HEK293 (cell line): ENCODE measurements at regions of chr16 and their contacts with region 1.

Region 1: DNA sequence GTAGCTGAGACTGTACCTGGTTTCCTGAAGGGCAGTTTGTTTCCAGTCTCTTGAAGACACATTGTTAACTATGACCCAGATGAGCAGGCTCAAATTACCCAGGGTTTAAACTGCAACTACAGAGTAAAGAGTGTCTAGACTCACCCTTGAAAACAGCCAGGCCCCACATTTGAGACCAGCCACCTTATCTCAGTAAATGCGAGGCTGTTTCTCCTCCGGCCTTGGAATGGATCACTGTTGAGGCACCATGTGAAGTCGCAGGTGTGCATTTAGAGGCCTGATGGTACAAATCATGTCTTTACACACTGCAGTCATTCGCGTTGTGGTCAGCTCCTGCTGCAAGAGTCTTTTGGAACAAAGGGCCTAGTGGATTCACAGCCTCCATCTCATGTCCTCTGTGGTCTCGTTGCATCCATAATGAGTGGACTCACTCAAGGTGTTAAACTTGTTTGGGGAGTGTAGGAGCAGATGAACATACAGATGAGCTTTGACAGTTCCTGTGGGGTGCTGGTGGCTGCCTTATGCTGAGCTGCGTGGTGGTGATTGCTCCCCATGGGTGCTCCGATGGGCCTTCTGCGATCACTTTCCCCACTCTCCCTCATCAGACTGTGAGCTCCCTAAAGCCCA is 18.5 kb upstream of the N4BP1 start:
- H3K4me3 ChIP-seq: no peak overlapping the region
- H3K27ac ChIP-seq: no peak overlapping the region
- H3K4me1 ChIP-seq: no peaks in the 10 kb centered on the region
- CTCF ChIP-seq: no peak

Region 2: GRCh38 chr16:48353565-48354163 is 274.8 kb before region 1 on chr16:
- CTCF ChIA-PET with region 1: interaction called, 29 read pairs
- POLR2A ChIA-PET with region 1: interaction called, 5 read pairs
- H3K4me3 ChIP-seq: no peak overlapping the region
- H3K27ac ChIP-seq: no peak overlapping the region
- H3K4me1 ChIP-seq: no peaks in the 10 kb centered on the region
- CTCF ChIP-seq: peak; percentile 91

Region 3: DNA sequence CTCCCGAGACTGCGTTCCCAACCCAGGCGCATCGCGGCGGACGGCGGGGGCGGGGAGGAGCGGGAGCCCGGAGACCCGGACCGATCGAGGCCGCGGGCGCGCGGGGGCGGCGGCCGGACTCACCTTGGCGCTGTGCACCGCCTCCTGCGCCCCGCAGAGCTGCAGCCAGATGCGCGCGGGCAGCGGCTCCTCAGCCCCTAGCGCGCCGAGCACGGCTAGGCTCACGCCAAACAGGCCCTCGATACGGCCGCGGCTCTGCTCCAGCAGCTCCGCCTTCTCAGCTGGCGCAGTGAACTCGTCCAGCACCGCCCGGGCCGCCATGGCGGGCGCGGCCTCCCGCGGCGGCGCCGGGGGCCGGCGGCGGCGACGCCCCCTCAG is 18.8 kb before region 1 on chr16:
- CTCF ChIA-PET with region 1: interaction called, 26 read pairs
- POLR2A ChIA-PET with region 1: interaction called, 3 read pairs
- H3K4me3 ChIP-seq: peak overlapping the region; percentile 90
- H3K27ac ChIP-seq: peak overlapping the region; percentile 93
- H3K4me1 ChIP-seq: no peaks in the 10 kb centered on the region; the same call in 1 of the 2 replicates
- CTCF ChIP-seq: no peak

Region 4: GRCh38 chr16:48641770-48642169 is 13.3 kb after region 1 on chr16:
- CTCF ChIA-PET with region 1: interaction called, 13 read pairs
- POLR2A ChIA-PET with region 1: no interaction called
- H3K4me3 ChIP-seq: no peak overlapping the region
- H3K27ac ChIP-seq: no peak overlapping the region
- H3K4me1 ChIP-seq: no peaks in the 10 kb centered on the region
- CTCF ChIP-seq: no peak

Region 5: DNA sequence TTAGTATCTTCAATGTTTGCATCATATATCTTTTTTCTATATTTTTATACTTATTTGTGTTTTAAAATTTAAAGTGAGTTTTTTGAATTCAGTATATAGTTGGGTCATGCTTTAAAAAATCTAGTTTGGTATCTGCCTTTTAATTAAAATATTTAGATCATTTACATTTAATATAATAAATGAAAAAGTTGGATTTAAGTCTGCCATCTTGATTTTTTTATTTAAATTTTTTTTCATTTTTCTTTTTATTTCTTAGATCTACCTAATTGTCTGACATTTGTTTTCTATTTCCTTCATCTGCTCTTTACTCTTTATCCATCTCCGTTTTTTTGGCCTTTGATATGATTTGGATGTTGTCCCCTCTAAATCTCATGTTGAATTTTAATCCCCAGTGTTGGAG is 31.5 kb after region 1 on chr16:
- CTCF ChIA-PET with region 1: no interaction called
- POLR2A ChIA-PET with region 1: no interaction called
- H3K4me3 ChIP-seq: no peak overlapping the region
- H3K27ac ChIP-seq: no peak overlapping the region
- H3K4me1 ChIP-seq: no peaks in the 10 kb centered on the region
- CTCF ChIP-seq: no peak